T-cell (primary cell): ENCODE measurements at regions of chr6 and their contacts with region 1.

Region 1: GRCh38 chr6:32952817-32953739 is at the start of gene HLA-DMA:
- DNase-seq: peak; percentile 57 to 89 (median 73)
- ATAC-seq: peak; percentile 97 to 99 (median 98)
- H3K4me3 ChIP-seq: peak within 1 kb of the TSS; percentile 38 to 65
- H3K4me3 Mint-ChIP-seq: peak within 1 kb of the TSS; percentile 66 to 82 (median 82)
- H3K27ac ChIP-seq: peak within 1 kb of the TSS; percentile 35
- H3K27ac Mint-ChIP-seq: peak within 1 kb of the TSS; percentile 83 to 91
- H3K4me1 ChIP-seq: peaks cover 9 to 41% of the 10 kb centered on the region in 2 experiments
- H3K4me1 Mint-ChIP-seq: peaks cover 41 to 59% (median 43%) of the 10 kb centered on the region in 3 donors
- H3K27me3 ChIP-seq: no peaks in the 10 kb centered on the region
- H3K27me3 Mint-ChIP-seq: no peaks in the 10 kb centered on the region
- total RNA-seq, gene HLA-DMA: 22.3 to 37.8 (median 27.5) TPM

Region 2: GRCh38 chr6:32885698-32886286 is 67.3 kb before region 1 on chr6:
- CTCF ChIA-PET with region 1: interaction called, 6 to 13 read pairs
- POLR2A ChIA-PET with region 1: interaction called, 3 to 7 read pairs
- DNase-seq: peak in 1 of 35 experiments; percentile 86
- ATAC-seq: peak; percentile 34 to 70 (median 64)
- H3K4me3 ChIP-seq: no peak overlapping the region
- H3K4me3 Mint-ChIP-seq: no peak overlapping the region
- H3K27ac ChIP-seq: no peak overlapping the region
- H3K27ac Mint-ChIP-seq: no peak overlapping the region
- H3K4me1 ChIP-seq: no peaks in the 10 kb centered on the region
- H3K4me1 Mint-ChIP-seq: peaks cover 0 to 4% (median 0%) of the 10 kb centered on the region in 3 donors
- H3K27me3 ChIP-seq: no peaks in the 10 kb centered on the region
- H3K27me3 Mint-ChIP-seq: no peaks in the 10 kb centered on the region

Region 3: GRCh38 chr6:32940656-32941213 is 12.3 kb before region 1 on chr6 and contains the start of gene HLA-DMB:
- CTCF ChIA-PET with region 1: interaction called in 1 of 2 experiments, 80 read pairs
- POLR2A ChIA-PET with region 1: interaction called, 3 to 6 read pairs
- DNase-seq: peak in 33 of 35 experiments; percentile 19 to 89 (median 42)
- ATAC-seq: peak; percentile 85 to 90 (median 87)
- H3K4me3 ChIP-seq: peak within 1 kb of the TSS; percentile 69 to 94
- H3K4me3 Mint-ChIP-seq: peak within 1 kb of the TSS; percentile 76 to 90 (median 88)
- H3K27ac ChIP-seq: peak within 1 kb of the TSS; percentile 93
- H3K27ac Mint-ChIP-seq: peak within 1 kb of the TSS; percentile 97 to 98
- H3K4me1 ChIP-seq: peaks cover 52 to 60% of the 10 kb centered on the region in 2 experiments
- H3K4me1 Mint-ChIP-seq: peaks cover 57 to 72% (median 59%) of the 10 kb centered on the region in 3 donors
- H3K27me3 ChIP-seq: no peaks in the 10 kb centered on the region
- H3K27me3 Mint-ChIP-seq: no peaks in the 10 kb centered on the region
- total RNA-seq, gene HLA-DMB: 8.8 to 30.6 (median 10.6) TPM